ENCODE measurements at regions of chr7 and their contacts with region 1.

Region 1: GRCh38 chr7:42931834-42932651 is at the starts of genes MRPL32 and PSMA2:
- DNase-seq: peak; percentile 89 to 98 (median 93)
- ATAC-seq: peak; percentile 98
- H3K4me3 ChIP-seq: peak within 1 kb of the TSS; percentile 93 to 98
- H3K4me3 Mint-ChIP-seq: peak within 1 kb of the TSS; percentile 100
- H3K27ac ChIP-seq: peak within 1 kb of the TSS; percentile 87 to 91
- H3K27ac Mint-ChIP-seq: peak within 1 kb of the TSS; percentile 98
- H3K4me1 ChIP-seq: peaks cover 45% of the 10 kb centered on the region
- H3K4me1 Mint-ChIP-seq: peaks cover 79% of the 10 kb centered on the region
- H3K27me3 ChIP-seq: no peaks in the 10 kb centered on the region
- H3K27me3 Mint-ChIP-seq: no peaks in the 10 kb centered on the region
- CTCF ChIP-seq: no peak
- total RNA-seq, gene MRPL32: 64.9 to 65.1 TPM
- total RNA-seq, gene PSMA2: 43.6 to 47.9 TPM

Region 2: DNA sequence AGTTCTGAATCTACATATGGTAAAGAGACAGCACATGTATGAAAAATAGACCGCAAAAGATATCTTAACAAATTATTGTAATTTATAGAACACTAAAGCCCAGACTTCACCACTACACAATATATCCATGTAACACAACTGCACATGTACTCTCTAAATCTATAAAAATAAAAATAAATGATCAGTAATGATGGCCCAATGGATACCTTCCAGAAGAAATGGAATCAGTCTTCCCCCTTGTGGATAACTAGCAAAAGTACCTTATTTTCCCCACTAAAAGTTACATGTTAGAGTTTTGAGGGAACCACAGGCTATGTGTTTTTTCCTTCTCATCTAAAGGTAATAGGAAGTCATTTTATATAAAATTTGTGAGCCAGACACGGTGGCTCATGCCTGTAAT is 45.9 kb before region 1 on chr7:
- CTCF ChIA-PET with region 1: no interaction called
- POLR2A ChIA-PET with region 1: interaction called, 12 read pairs
- intact Hi-C with region 1: loop called in 1 of 2 experiments (anchors 2 kb)
- DNase-seq: no peak
- ATAC-seq: no peak
- H3K4me3 ChIP-seq: no peak overlapping the region
- H3K4me3 Mint-ChIP-seq: no peak overlapping the region
- H3K27ac ChIP-seq: no peak overlapping the region
- H3K27ac Mint-ChIP-seq: no peak overlapping the region
- H3K4me1 ChIP-seq: peaks cover 10% of the 10 kb centered on the region
- H3K4me1 Mint-ChIP-seq: peaks cover 23% of the 10 kb centered on the region
- H3K27me3 ChIP-seq: peaks cover 0 to 3% of the 10 kb centered on the region in 2 experiments
- H3K27me3 Mint-ChIP-seq: peaks cover 2% of the 10 kb centered on the region
- CTCF ChIP-seq: peak; percentile 13

Region 3: GRCh38 chr7:42993038-42993437 is 61.0 kb after region 1 on chr7:
- CTCF ChIA-PET with region 1: no interaction called
- POLR2A ChIA-PET with region 1: no interaction called
- intact Hi-C with region 1: no loop called
- DNase-seq: no peak
- ATAC-seq: no peak
- H3K4me3 ChIP-seq: no peak overlapping the region
- H3K4me3 Mint-ChIP-seq: no peak overlapping the region
- H3K27ac ChIP-seq: no peak overlapping the region
- H3K27ac Mint-ChIP-seq: no peak overlapping the region
- H3K4me1 ChIP-seq: no peaks in the 10 kb centered on the region
- H3K4me1 Mint-ChIP-seq: no peaks in the 10 kb centered on the region
- H3K27me3 ChIP-seq: no peaks in the 10 kb centered on the region
- H3K27me3 Mint-ChIP-seq: peaks cover 9% of the 10 kb centered on the region
- CTCF ChIP-seq: no peak

Region 4: GRCh38 chr7:43729214-43729923 is 797.3 kb after region 1 on chr7 and contains the start of gene COA1:
- CTCF ChIA-PET with region 1: interaction called, 4 read pairs
- POLR2A ChIA-PET with region 1: interaction called, 5 read pairs
- intact Hi-C with region 1: loop called in 1 of 2 experiments (anchors 2 kb)
- DNase-seq: peak; percentile 61 to 93 (median 81)
- ATAC-seq: peak; percentile 92
- H3K4me3 ChIP-seq: peak within 1 kb of the TSS; percentile 81 to 89
- H3K4me3 Mint-ChIP-seq: peak within 1 kb of the TSS; percentile 93
- H3K27ac ChIP-seq: peak within 1 kb of the TSS; percentile 70 to 74
- H3K27ac Mint-ChIP-seq: peak within 1 kb of the TSS; percentile 90
- H3K4me1 ChIP-seq: peaks cover 31% of the 10 kb centered on the region
- H3K4me1 Mint-ChIP-seq: peaks cover 42% of the 10 kb centered on the region
- H3K27me3 ChIP-seq: no peaks in the 10 kb centered on the region
- H3K27me3 Mint-ChIP-seq: no peaks in the 10 kb centered on the region
- CTCF ChIP-seq: no peak
- total RNA-seq, gene COA1: 95.8 to 96.7 TPM

Region 5: DNA sequence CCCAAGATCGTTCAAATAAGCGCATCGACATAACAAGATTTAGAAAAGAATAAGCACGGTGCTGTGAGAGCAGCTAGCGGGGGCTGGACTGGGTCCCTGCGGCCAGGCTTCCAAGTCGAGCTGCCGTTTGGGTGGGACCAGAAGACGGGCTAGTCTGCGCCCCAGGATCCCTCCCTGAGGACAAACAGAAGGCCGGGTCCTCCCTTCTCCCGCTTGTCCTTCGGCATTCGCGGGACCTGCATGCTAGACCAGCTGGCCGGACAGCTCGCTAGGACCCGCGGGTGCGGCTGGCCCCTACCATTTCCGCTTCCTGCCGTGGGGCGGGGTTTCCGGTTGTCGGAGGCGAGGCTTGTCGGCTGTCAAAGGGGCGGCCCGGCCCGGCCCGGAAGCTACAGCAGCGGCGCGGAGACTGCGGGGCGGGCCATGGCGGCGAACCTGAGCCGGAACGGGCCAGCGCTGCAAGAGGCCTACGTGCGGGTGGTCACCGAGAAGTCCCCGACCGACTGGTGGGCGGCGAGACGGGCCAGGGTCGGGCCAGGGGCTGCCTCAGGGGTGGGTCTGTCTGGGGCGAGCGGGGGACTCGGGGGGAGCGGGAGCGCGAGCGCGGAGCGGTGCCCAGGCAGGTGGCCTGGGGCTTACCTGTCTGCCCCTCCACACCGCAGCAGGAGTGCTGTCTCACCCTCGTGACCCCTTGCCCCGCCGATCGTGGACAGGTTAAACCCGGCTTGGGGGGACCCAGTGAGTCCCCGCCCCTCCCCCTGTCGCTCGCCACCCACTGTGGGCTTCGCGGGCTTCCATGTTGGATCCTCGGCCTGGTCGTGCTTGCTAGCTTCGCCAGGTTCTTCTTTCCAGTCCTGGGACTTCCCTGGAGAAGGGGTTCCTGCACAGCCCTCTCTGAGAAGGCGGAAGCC is 1112.5 kb after region 1 on chr7 and contains the start of gene DBNL:
- CTCF ChIA-PET with region 1: no interaction called
- POLR2A ChIA-PET with region 1: no interaction called
- intact Hi-C with region 1: loop called in 1 of 2 experiments (anchors 10 kb)
- DNase-seq: peak; percentile 66 to 95 (median 88)
- ATAC-seq: peak; percentile 48
- H3K4me3 ChIP-seq: peak within 1 kb of the TSS; percentile 76 to 78
- H3K4me3 Mint-ChIP-seq: peak within 1 kb of the TSS; percentile 91
- H3K27ac ChIP-seq: peak within 1 kb of the TSS; percentile 73 to 91
- H3K27ac Mint-ChIP-seq: peak within 1 kb of the TSS; percentile 97
- H3K4me1 ChIP-seq: peaks cover 49% of the 10 kb centered on the region
- H3K4me1 Mint-ChIP-seq: peaks cover 50% of the 10 kb centered on the region
- H3K27me3 ChIP-seq: no peaks in the 10 kb centered on the region
- H3K27me3 Mint-ChIP-seq: no peaks in the 10 kb centered on the region
- CTCF ChIP-seq: no peak
- total RNA-seq, gene DBNL: 82.1 to 84.8 TPM

Region 6: GRCh38 chr7:44573464-44574286 is 1641.6 kb after region 1 on chr7 and contains the start of gene DDX56:
- CTCF ChIA-PET with region 1: no interaction called
- POLR2A ChIA-PET with region 1: no interaction called
- intact Hi-C with region 1: loop called in 1 of 2 experiments (anchors 10 kb)
- DNase-seq: peak; percentile 75 to 96 (median 93)
- ATAC-seq: peak; percentile 96
- H3K4me3 ChIP-seq: peak within 1 kb of the TSS; percentile 92 to 94
- H3K4me3 Mint-ChIP-seq: peak within 1 kb of the TSS; percentile 96
- H3K27ac ChIP-seq: peak within 1 kb of the TSS; percentile 91 to 94
- H3K27ac Mint-ChIP-seq: peak within 1 kb of the TSS; percentile 99
- H3K4me1 ChIP-seq: peaks cover 28% of the 10 kb centered on the region
- H3K4me1 Mint-ChIP-seq: peaks cover 51% of the 10 kb centered on the region
- H3K27me3 ChIP-seq: no peaks in the 10 kb centered on the region
- H3K27me3 Mint-ChIP-seq: no peaks in the 10 kb centered on the region
- CTCF ChIP-seq: no peak
- total RNA-seq, gene DDX56: 140 to 141 TPM